HEK293T (cell line): ENCODE measurements at regions of chrX and their contacts with region 1.

Region 1: DNA sequence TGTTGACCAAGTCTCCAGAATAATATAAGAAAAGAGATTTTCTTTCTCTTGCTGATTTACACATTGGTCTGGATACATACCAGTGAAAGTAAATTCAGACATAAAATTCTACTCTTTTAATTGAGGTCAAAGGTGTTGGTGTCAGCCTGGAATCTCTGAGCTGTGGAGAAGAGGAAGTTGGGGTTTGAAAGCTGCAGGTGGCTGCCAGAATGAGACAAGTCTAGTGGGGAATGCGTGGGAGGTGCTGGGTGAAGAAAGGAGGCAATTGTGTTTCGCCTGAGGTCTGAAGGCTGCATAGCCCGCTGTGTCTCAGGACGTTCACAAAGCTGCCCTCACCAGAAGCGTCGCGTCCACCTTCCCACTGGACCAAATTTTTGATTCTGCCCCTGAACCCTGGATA is 31.2 kb downstream of the PHEX start:
- DNase-seq: no peak

Region 2: DNA sequence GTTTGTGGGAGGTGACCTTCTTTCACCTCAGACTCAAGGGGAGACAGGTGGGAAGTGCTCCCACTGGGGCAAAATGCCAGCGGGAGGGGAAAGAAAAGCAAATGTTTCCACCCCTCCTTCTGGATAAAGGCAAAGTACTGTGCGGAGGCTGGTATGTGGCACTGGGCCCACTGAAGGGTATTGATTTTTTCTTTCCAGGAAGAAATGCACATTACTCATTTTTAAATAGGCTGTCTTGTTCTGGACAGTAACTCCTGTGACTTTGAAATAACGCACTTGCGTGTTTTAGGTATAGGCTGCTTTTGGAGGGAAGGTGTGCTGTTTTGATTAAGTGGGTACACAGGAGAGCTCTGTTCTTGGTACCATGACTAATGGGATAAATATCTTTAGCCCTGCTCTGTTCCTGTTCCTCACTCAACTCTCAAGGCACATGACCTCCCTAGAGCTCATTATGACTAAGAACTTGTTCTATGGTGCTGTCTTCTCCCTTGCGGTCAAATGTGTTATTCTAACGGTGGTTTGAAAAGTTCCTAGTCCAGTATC is 264.5 kb before region 1 on chrX:
- CTCF ChIA-PET with region 1: no interaction called
- POLR2A ChIA-PET with region 1: no interaction called
- DNase-seq: no peak

Region 3: GRCh38 chrX:22073918-22074317 is 10.6 kb after region 1 on chrX:
- CTCF ChIA-PET with region 1: no interaction called
- POLR2A ChIA-PET with region 1: no interaction called
- DNase-seq: no peak

Region 4: DNA sequence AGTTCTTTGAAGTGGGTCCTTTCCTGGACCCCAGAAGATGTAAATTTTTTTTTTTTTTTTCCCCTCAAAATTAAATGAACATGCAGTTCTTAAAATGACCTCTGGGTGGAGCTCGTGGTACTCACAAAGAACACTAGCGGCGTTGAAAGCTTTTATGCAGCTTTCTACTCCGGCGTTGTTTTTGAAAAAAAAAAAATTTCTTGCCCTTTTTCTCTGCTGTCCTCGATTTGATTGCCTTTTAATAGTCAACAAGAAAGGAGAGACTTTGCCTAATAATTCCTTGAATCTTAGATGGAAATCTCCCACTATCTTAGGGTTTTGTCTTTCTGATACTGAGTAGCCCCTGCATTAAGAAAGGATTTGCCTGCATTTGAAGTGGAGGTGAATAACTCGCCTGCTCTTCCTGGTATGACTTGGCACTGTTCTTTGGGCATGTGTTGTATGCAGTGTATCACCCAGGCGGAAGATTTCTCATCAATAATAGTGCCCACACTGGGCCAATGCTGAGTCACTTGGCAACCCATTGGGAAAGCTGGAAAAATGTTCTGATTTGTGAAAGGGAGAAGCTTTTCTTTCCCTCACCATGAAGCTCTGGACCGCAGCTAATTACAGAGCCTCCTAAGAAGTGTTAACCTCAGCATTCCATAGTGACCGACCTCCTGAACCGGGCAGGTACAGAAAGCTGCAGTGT is 72.9 kb after region 1 on chrX:
- CTCF ChIA-PET with region 1: interaction called, 18 read pairs
- POLR2A ChIA-PET with region 1: no interaction called
- DNase-seq: peak; percentile 41